ENCODE measurements at regions of chr10 and their contacts with region 1.

Region 1: GRCh38 chr10:52890281-52890680 is 117.7 kb upstream of the MBL2 start:
- DNase-seq: no peak
- ATAC-seq: no peak
- H3K4me3 ChIP-seq: no peak overlapping the region
- H3K27ac ChIP-seq: no peak overlapping the region
- H3K4me1 ChIP-seq: no peaks in the 10 kb centered on the region
- H3K27me3 ChIP-seq: peaks cover 6% of the 10 kb centered on the region
- CTCF ChIP-seq: no peak
- POLR2A ChIP-seq: no peak
- RAD21 ChIP-seq: no peak

Region 2: GRCh38 chr10:53003094-53003493 is 112.8 kb after region 1 on chr10:
- CTCF ChIA-PET with region 1: no interaction called
- POLR2A ChIA-PET with region 1: no interaction called
- dilution Hi-C with region 1: no loop called
- in situ Hi-C with region 1: no loop called
- intact Hi-C with region 1: no loop called
- DNase-seq: no peak
- ATAC-seq: no peak
- H3K4me3 ChIP-seq: no peak overlapping the region
- H3K27ac ChIP-seq: no peak overlapping the region
- H3K4me1 ChIP-seq: no peaks in the 10 kb centered on the region
- H3K27me3 ChIP-seq: no peaks in the 10 kb centered on the region
- CTCF ChIP-seq: no peak
- POLR2A ChIP-seq: no peak
- RAD21 ChIP-seq: no peak

Region 3: GRCh38 chr10:54854389-54854788 is 1964.1 kb after region 1 on chr10:
- CTCF ChIA-PET with region 1: no interaction called
- POLR2A ChIA-PET with region 1: no interaction called
- dilution Hi-C with region 1: no loop called
- in situ Hi-C with region 1: no loop called
- intact Hi-C with region 1: loop called (anchors 5 kb)
- DNase-seq: no peak
- ATAC-seq: no peak
- H3K4me3 ChIP-seq: no peak overlapping the region
- H3K27ac ChIP-seq: no peak overlapping the region
- H3K4me1 ChIP-seq: no peaks in the 10 kb centered on the region
- H3K27me3 ChIP-seq: no peaks in the 10 kb centered on the region
- CTCF ChIP-seq: no peak
- POLR2A ChIP-seq: no peak
- RAD21 ChIP-seq: no peak

Measured in IMR-90 (cell line).